ENCODE measurements at regions of chr12 and their contacts with region 1.

Region 1: DNA sequence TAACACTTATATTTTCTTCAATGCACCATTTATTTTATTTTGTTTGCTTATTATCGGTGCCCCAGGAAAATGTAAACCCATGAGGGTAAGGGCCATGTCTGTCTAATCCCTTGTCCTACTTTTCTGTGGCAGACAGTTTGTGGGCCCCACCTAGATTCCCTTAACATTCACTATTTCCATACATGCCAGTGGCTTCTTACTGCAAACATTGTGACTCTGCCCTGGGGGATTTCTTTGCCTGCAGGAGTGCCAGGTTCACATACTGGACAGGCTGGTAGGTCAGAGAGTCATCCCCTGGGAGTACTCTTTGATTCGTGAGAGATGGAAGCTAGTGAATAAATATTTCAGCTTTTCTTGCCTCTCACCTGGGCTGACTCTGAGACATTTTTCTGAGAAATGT is 122.8 kb upstream of the TBX5 start:
- DNase-seq: no peak
- H3K4me3 Mint-ChIP-seq: no peak overlapping the region
- H3K27ac Mint-ChIP-seq: no peak overlapping the region
- H3K4me1 Mint-ChIP-seq: no peaks in the 10 kb centered on the region
- H3K27me3 Mint-ChIP-seq: no peaks in the 10 kb centered on the region
- CTCF ChIP-seq: no peak

Region 2: DNA sequence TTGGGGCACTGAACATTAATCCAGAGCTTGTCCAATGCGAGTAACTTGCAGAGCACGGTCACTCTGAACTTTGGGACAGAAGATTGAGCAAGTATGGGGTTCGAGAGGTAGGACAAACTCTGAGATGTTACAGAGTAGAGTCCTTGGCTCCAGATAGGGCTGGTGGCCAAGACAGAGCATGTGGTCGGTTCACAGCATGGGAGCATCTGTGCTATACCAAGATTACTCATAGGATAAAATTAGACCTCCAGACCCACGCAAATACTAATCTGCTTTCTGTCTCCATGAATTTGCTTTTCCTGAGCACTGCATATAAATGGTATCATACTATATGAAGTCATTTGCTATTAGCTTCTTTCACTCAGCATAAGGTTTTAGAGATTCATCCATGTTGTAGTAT is 29.4 kb before region 1 on chr12:
- CTCF ChIA-PET with region 1: interaction called, 10 read pairs
- POLR2A ChIA-PET with region 1: no interaction called
- intact Hi-C with region 1: no loop called
- DNase-seq: no peak
- H3K4me3 Mint-ChIP-seq: no peak overlapping the region
- H3K27ac Mint-ChIP-seq: no peak overlapping the region
- H3K4me1 Mint-ChIP-seq: no peaks in the 10 kb centered on the region
- H3K27me3 Mint-ChIP-seq: peaks cover 74% of the 10 kb centered on the region
- CTCF ChIP-seq: no peak

Region 3: GRCh38 chr12:115374480-115375185 is 845.9 kb after region 1 on chr12:
- CTCF ChIA-PET with region 1: no interaction called
- POLR2A ChIA-PET with region 1: no interaction called
- intact Hi-C with region 1: no loop called
- DNase-seq: no peak
- H3K4me3 Mint-ChIP-seq: no peak overlapping the region
- H3K27ac Mint-ChIP-seq: peak overlapping the region; percentile 3
- H3K4me1 Mint-ChIP-seq: peaks cover 11% of the 10 kb centered on the region
- H3K27me3 Mint-ChIP-seq: no peaks in the 10 kb centered on the region
- CTCF ChIP-seq: no peak

Measured in MCF 10A (cell line).